ENCODE measurements at regions of chr20 and their contacts with region 1.

Region 1: DNA sequence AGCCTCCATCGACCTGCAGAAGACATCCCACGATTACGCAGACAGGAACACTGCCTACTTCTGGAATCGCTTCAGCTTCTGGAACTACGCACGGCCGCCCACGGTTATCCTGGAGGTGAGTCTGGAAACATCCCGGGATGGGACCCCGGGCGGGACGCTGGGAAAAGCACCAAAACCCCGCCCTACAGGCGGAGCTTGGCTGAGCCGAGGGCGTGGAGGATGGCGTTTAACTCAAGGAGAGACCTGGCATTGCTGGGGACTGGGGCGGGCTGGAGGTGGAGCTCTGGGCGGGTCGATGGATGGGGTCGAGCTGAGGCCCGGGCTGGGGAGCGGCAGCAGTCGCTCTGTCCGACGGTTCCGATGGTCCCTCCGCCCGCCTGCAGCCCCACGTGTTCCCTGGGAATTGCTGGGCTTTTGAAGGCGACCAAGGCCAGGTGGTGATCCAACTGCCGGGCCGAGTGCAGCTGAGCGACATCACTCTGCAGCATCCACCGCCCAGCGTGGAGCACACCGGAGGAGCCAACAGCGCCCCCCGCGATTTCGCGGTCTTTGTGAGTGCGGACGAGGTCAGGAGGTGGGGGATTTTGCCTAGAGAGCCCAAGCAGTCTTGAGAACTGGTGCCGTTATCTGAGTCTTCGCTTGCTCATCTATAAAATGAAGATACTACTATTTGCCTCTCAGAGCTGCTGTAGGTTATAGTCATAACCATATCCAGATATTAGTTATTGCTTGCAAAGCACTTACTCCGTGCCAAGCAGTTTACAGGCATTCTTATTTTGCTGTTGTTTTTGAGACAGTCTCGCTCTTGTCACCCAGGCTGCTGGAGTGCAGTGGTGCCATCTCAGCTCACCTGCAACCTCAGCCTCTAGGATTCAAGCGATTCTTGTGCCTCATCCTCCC is 3.8 kb downstream of the SPAG4 start:
- DNase-seq: peak; percentile 57 to 91 (median 76)
- ATAC-seq: peak; percentile 8
- H3K4me3 ChIP-seq: peak overlapping the region; percentile 64 to 69
- H3K4me3 Mint-ChIP-seq: peak overlapping the region; percentile 90
- H3K27ac ChIP-seq: peak overlapping the region in 1 of 2 experiments; percentile 25
- H3K27ac Mint-ChIP-seq: peak overlapping the region; percentile 75
- H3K4me1 ChIP-seq: peaks cover 27% of the 10 kb centered on the region
- H3K4me1 Mint-ChIP-seq: peaks cover 35% of the 10 kb centered on the region
- H3K27me3 ChIP-seq: peaks cover 0 to 4% of the 10 kb centered on the region in 2 experiments
- H3K27me3 Mint-ChIP-seq: no peaks in the 10 kb centered on the region
- CTCF ChIP-seq: peak; percentile 52

Region 2: GRCh38 chr20:35235881-35236280 is 383.6 kb before region 1 on chr20:
- CTCF ChIA-PET with region 1: no interaction called
- POLR2A ChIA-PET with region 1: no interaction called
- intact Hi-C with region 1: no loop called
- DNase-seq: no peak
- ATAC-seq: no peak
- H3K4me3 ChIP-seq: no peak overlapping the region
- H3K4me3 Mint-ChIP-seq: no peak overlapping the region
- H3K27ac ChIP-seq: no peak overlapping the region
- H3K27ac Mint-ChIP-seq: no peak overlapping the region
- H3K4me1 ChIP-seq: no peaks in the 10 kb centered on the region
- H3K4me1 Mint-ChIP-seq: peaks cover 2% of the 10 kb centered on the region
- H3K27me3 ChIP-seq: no peaks in the 10 kb centered on the region
- H3K27me3 Mint-ChIP-seq: peaks cover 15% of the 10 kb centered on the region
- CTCF ChIP-seq: no peak

Region 3: DNA sequence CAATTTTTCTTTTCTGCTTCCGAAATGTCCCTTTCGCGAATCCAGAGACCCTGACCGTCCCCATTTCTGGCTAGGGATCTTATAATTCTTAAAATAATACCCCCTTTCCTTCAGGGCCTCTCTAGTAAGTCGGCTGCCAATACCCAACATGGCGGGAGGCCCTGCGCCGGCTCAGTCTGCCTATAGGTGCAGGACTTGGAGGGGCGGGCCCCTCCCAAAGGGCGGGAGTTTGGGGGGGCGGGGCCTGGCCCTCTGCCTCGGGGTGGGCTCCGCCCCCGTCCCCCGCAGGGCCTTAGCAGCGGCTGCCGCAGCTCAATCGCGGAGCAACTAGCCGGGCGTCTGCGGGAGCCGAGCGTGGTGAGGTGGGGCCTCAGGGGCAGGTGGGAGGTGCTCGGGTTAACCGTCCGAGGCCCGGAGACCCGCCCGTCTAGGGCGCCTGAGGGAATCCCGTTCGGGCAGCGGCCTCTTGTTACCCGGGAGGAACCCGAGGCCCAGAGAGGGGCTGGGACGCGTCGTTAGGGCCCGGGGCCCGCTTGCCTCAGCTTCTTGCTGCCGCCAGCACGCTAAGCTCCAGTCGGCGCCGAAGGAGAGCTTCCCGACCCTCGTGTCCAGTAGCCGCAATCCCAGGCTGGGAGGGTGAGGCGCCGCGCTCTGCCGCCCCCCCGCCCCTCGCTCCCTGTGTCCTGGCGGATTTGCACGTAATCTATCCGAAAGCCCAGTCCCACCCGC is 164.4 kb before region 1 on chr20 and contains the start of gene CEP250:
- CTCF ChIA-PET with region 1: no interaction called
- POLR2A ChIA-PET with region 1: interaction called, 6 read pairs
- intact Hi-C with region 1: loop called (anchors 1 to 2 kb)
- DNase-seq: peak; percentile 86 to 96 (median 95)
- ATAC-seq: peak; percentile 98
- H3K4me3 ChIP-seq: peak within 1 kb of the TSS; percentile 62 to 94
- H3K4me3 Mint-ChIP-seq: peak within 1 kb of the TSS; percentile 94
- H3K27ac ChIP-seq: peak within 1 kb of the TSS; percentile 52 to 94
- H3K27ac Mint-ChIP-seq: peak within 1 kb of the TSS; percentile 97
- H3K4me1 ChIP-seq: peaks cover 10% of the 10 kb centered on the region
- H3K4me1 Mint-ChIP-seq: peaks cover 21% of the 10 kb centered on the region
- H3K27me3 ChIP-seq: no peaks in the 10 kb centered on the region
- H3K27me3 Mint-ChIP-seq: no peaks in the 10 kb centered on the region
- CTCF ChIP-seq: no peak
- total RNA-seq, gene CEP250: 33.4 to 34.4 TPM

Region 4: DNA sequence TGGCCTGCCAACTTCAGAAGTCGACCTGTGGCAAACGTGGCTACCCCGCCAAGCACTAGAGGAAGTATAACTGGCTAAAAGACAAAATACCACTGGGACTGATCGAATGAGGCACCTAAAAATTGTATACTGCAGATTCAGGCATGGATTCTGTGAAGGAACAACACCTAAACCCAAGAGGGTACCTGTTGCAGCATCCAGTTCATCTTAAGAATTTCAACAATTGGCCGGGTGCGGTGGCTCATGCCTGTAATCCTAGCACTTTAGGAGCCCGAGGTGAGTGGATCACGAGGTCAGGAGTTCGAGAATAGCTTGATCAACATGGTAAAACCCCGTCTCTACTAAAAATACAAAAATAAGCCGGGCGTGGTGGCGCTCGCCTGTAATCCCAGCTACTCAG is 31.0 kb before region 1 on chr20:
- CTCF ChIA-PET with region 1: no interaction called
- POLR2A ChIA-PET with region 1: no interaction called
- intact Hi-C with region 1: no loop called
- DNase-seq: no peak
- ATAC-seq: no peak
- H3K4me3 ChIP-seq: no peak overlapping the region
- H3K4me3 Mint-ChIP-seq: no peak overlapping the region
- H3K27ac ChIP-seq: no peak overlapping the region
- H3K27ac Mint-ChIP-seq: no peak overlapping the region
- H3K4me1 ChIP-seq: no peaks in the 10 kb centered on the region
- H3K4me1 Mint-ChIP-seq: no peaks in the 10 kb centered on the region
- H3K27me3 ChIP-seq: no peaks in the 10 kb centered on the region
- H3K27me3 Mint-ChIP-seq: peaks cover 2% of the 10 kb centered on the region
- CTCF ChIP-seq: no peak

Region 5: DNA sequence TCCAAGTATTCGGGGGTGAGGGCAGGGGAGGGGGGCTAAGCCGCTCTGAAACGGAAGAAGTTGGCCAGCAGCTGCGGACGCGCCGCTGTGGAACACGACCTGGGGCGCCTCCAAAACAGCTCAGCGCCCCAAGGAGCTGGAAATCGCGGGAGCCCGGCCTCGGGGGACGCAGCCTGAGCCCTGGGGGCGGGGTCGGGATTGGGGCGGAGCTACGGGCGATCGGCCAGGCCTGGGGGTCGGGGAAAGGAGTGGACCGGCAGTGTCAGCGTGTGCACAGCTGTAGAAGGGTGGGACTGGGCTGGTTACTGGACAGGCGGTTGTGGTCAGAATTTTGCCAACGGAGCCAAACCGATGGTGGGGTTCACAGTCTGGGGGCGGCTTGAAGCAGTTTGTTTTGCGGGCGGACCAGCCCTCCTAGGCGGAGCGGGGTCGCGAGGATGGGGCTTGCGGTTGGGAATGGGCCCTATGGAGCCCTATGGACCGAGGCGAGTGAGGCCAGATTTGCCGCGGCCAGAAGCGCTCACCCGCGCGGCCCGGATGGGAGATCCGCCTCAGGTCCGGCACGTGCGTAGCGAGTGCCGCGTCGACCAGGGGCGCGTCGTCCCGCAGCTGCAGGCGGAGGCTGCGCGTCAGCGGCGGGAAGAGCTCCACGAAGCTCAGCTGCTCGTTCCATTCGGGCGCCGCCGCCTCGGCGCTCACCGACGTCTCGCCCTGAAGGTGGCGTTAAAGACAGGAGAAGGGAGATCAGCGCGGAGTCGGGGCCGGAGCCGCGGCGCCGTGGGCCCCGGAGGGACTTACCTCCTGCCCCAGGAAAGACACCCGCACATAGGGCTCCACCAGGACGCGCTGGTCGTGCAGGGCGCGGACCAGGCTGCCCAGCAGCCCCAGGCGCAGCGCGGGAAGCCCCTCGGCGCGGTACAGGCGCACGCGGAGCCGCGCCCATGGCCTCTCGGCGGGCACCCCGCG is 18.2 kb before region 1 on chr20:
- CTCF ChIA-PET with region 1: interaction called, 14 read pairs
- POLR2A ChIA-PET with region 1: interaction called, 8 read pairs
- intact Hi-C with region 1: loop called (anchors 1 kb)
- DNase-seq: peak; percentile 59 to 90 (median 83)
- ATAC-seq: peak; percentile 92
- H3K4me3 ChIP-seq: peak overlapping the region; percentile 58 to 59
- H3K4me3 Mint-ChIP-seq: peak overlapping the region; percentile 82
- H3K27ac ChIP-seq: no peak overlapping the region
- H3K27ac Mint-ChIP-seq: no peak overlapping the region
- H3K4me1 ChIP-seq: peaks cover 16% of the 10 kb centered on the region
- H3K4me1 Mint-ChIP-seq: peaks cover 11% of the 10 kb centered on the region
- H3K27me3 ChIP-seq: peaks cover 5 to 8% of the 10 kb centered on the region in 2 experiments
- H3K27me3 Mint-ChIP-seq: peaks cover 14% of the 10 kb centered on the region
- CTCF ChIP-seq: peak; percentile 66

Region 6: GRCh38 chr20:35664544-35665221 is 45.2 kb after region 1 on chr20 and contains the starts of genes CPNE1 and RBM12:
- CTCF ChIA-PET with region 1: interaction called, 17 read pairs
- POLR2A ChIA-PET with region 1: interaction called, 29 read pairs
- intact Hi-C with region 1: loop called (anchors 1 kb)
- DNase-seq: peak; percentile 86 to 97 (median 93)
- ATAC-seq: peak; percentile 67
- H3K4me3 ChIP-seq: peak within 1 kb of the TSS; percentile 60 to 87
- H3K4me3 Mint-ChIP-seq: peak within 1 kb of the TSS; percentile 87
- H3K27ac ChIP-seq: peak within 1 kb of the TSS; percentile 95 to 98
- H3K27ac Mint-ChIP-seq: peak within 1 kb of the TSS; percentile 98
- H3K4me1 ChIP-seq: peaks cover 29% of the 10 kb centered on the region
- H3K4me1 Mint-ChIP-seq: peaks cover 43% of the 10 kb centered on the region
- H3K27me3 ChIP-seq: no peaks in the 10 kb centered on the region
- H3K27me3 Mint-ChIP-seq: no peaks in the 10 kb centered on the region
- CTCF ChIP-seq: no peak
- total RNA-seq, gene CPNE1: 124 to 129 TPM
- total RNA-seq, gene RBM12: 97.4 to 102 TPM

Region 7: DNA sequence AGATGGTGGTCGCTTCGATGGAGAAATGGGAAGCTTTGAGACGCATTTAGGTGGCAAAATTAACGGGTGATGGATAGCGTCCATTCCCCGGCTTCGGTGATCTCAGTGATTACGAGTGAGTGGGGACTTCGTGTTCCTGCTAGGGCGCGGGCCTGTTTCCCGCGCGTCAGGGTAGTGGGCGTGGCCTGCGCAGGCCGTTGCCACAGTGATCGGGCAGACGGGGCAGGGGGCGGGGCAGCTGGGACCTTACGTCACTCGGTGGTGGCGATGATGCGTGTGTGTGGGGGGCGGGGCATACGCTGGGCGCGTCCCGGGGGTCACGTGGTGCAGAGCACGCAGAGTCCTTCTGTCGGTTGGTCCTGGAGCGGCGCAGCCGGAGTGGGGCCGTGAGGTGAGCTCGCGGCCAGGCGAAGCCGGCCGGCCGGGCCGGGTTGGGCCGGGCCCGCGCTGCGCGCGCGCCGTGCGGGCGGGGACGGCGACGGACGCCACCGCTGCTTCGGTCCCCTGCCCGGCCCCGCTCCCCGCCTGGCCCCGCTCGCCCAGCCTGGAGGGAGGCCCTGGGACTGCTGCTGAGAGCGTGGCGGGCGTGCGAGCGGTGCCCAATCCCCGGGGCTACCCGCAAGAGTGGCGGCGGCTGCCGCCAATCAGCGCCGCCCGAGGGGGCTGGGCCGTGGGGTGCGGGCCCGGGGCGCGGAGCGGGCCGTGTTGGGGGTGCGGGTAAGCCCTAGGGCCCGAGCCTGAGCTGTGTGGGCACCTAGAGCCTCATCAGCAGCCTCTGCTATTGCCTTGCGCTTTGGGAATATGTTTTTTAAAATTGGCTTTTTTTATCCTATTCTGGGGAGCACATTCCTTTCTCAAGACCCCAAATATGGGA is 152.5 kb after region 1 on chr20 and contains the start of gene PHF20:
- CTCF ChIA-PET with region 1: interaction called, 3 read pairs
- POLR2A ChIA-PET with region 1: interaction called, 4 read pairs
- intact Hi-C with region 1: loop called (anchors 1 to 2 kb)
- DNase-seq: peak; percentile 100
- ATAC-seq: peak; percentile 82
- H3K4me3 ChIP-seq: peak within 1 kb of the TSS; percentile 65 to 71
- H3K4me3 Mint-ChIP-seq: peak within 1 kb of the TSS; percentile 91
- H3K27ac ChIP-seq: peak within 1 kb of the TSS; percentile 87 to 95
- H3K27ac Mint-ChIP-seq: peak within 1 kb of the TSS; percentile 100
- H3K4me1 ChIP-seq: peaks cover 89% of the 10 kb centered on the region
- H3K4me1 Mint-ChIP-seq: peaks cover 81% of the 10 kb centered on the region
- H3K27me3 ChIP-seq: no peaks in the 10 kb centered on the region
- H3K27me3 Mint-ChIP-seq: no peaks in the 10 kb centered on the region
- CTCF ChIP-seq: no peak
- total RNA-seq, gene PHF20: 101 to 107 TPM

Measured in CD8-positive, alpha-beta T cell (primary cell).